Transverse colon (tissue), 4 donors: ENCODE measurements at regions of chr10 and their contacts with region 1.

Region 1: GRCh38 chr10:63320683-63321082 is 145.1 kb downstream of the JMJD1C start:
- DNase-seq: no peak
- H3K4me3 ChIP-seq: no peak overlapping the region
- H3K27ac ChIP-seq: no peak overlapping the region
- H3K4me1 ChIP-seq: no peaks in the 10 kb centered on the region
- H3K27me3 ChIP-seq: no peaks in the 10 kb centered on the region
- CTCF ChIP-seq: no peak
- EP300 ChIP-seq: no peak
- POLR2A ChIP-seq: no peak

Region 2: GRCh38 chr10:62715383-62715782 is 605.3 kb before region 1 on chr10:
- in situ Hi-C with region 1: no loop called
- intact Hi-C with region 1: no loop called
- DNase-seq: no peak
- H3K4me3 ChIP-seq: no peak overlapping the region
- H3K27ac ChIP-seq: no peak overlapping the region
- H3K4me1 ChIP-seq: no peaks in the 10 kb centered on the region
- H3K27me3 ChIP-seq: no peaks in the 10 kb centered on the region
- CTCF ChIP-seq: no peak
- EP300 ChIP-seq: no peak
- POLR2A ChIP-seq: no peak

Region 3: DNA sequence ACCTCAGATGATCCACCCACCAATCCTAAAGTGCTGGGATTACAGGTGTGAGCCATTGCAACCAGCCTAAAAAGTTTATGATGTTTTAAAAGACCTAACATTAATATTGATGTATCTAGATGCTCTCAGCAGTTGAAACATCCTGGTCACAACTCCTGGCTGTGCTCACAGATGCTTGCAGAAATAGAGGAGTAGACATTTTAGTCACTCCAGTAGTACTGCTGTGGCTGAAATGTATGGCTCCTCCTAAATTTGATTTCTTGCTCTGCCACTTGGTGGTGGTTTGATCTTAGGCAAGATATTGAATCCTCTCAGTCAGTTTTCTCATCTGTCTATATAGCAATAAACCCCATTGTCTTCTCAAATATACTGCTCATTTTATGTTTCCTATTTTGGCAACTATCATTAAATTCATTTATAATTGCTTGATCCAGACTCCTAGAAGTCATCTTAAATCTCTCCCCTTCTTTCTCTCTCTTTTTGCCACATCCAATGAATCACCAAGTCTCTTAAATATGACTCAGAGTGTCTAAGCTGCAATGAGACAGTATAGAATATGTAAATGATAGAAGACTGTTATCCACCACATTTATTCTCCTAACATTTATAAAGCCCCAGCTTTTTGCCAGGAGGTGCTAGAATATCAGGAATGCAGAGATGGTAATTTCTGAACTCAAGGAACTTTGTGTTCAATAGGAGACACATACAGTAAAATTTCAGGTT is 265.6 kb before region 1 on chr10:
- in situ Hi-C with region 1: no loop called
- intact Hi-C with region 1: no loop called
- DNase-seq: no peak
- H3K4me3 ChIP-seq: no peak overlapping the region
- H3K27ac ChIP-seq: no peak overlapping the region
- H3K4me1 ChIP-seq: no peaks in the 10 kb centered on the region
- H3K27me3 ChIP-seq: no peaks in the 10 kb centered on the region
- CTCF ChIP-seq: no peak
- EP300 ChIP-seq: no peak
- POLR2A ChIP-seq: no peak

Region 4: DNA sequence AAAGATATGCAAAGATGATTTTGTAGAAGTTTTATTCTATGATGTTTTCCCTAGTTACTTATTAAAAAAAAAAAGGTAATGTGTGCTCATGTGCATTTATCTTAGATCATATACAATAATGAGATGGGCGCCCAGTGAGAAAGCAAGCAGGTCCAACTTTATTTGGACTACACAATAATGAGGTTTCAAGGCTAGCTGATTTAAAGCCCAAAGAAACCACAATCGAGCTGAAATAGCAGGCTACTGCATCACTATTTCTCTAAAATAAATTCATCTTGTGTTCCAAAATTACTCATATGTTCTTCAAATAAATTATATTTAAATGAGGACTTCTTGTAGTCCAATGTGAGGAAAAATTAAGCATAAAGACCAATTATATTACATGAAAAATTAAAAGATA is 35.0 kb after region 1 on chr10:
- in situ Hi-C with region 1: no loop called
- intact Hi-C with region 1: loop called (anchors 2 kb)
- DNase-seq: no peak
- H3K4me3 ChIP-seq: no peak overlapping the region
- H3K27ac ChIP-seq: no peak overlapping the region
- H3K4me1 ChIP-seq: peaks cover 0 to 8% (median 0%) of the 10 kb centered on the region in 4 donors
- H3K27me3 ChIP-seq: no peaks in the 10 kb centered on the region
- CTCF ChIP-seq: no peak
- EP300 ChIP-seq: no peak
- POLR2A ChIP-seq: no peak

Region 5: GRCh38 chr10:63700209-63700613 is 379.5 kb after region 1 on chr10:
- in situ Hi-C with region 1: no loop called
- intact Hi-C with region 1: no loop called
- DNase-seq: no peak
- H3K4me3 ChIP-seq: no peak overlapping the region
- H3K27ac ChIP-seq: peak overlapping the region; percentile 66 to 80 (median 76)
- H3K4me1 ChIP-seq: peaks cover 0 to 32% (median 19%) of the 10 kb centered on the region in 4 donors
- H3K27me3 ChIP-seq: no peaks in the 10 kb centered on the region
- CTCF ChIP-seq: no peak
- EP300 ChIP-seq: no peak
- POLR2A ChIP-seq: no peak